ENCODE measurements at regions of chr7 and their contacts with region 1.

Region 1: DNA sequence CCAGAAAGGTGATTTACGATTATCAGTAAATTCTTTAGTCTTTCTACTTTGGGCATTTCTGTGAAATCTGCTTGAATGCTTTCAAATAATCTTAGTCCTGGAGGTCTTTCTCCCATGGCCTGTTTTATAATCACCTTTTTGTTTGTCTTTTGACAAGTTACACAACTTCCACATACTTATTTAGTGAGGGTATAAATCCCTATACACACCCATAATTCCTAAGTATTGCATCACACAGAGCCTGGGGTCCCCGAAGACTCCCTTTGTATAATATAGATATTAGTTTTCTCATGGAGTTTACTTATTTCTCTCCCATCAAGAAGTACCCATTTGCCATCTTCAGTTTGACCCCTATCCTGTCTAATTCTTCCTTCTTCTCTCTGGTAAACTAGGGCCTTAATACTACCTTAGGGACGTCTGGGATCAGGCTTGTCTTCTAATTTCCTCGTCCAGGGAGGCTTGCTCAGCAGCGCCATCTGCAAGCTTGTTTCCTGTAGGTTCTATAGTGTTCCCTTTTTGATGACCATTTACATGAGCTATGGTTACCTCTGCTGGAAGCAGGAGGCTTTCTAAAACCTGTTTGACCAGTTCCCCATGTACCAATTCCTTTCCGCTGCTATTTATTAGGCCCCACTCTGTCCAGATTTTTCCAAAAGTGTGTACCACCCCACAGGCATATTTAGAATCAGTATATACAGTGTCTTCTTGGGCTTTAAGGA is 8.1 kb downstream of the DNAH11 start:
- DNase-seq: peak in 1 of 2 experiments; percentile 52
- H3K4me3 ChIP-seq: no peak overlapping the region
- H3K27ac ChIP-seq: no peak overlapping the region
- H3K4me1 ChIP-seq: peaks cover 0 to 8% (median 1%) of the 10 kb centered on the region in 4 experiments; a peak in 3 of 7 replicates
- H3K27me3 ChIP-seq: no peaks in the 10 kb centered on the region
- CTCF ChIP-seq: peak; percentile 21 to 71 (median 51); a peak in 3 of 4 replicates
- EP300 ChIP-seq: no peak
- POLR2A ChIP-seq: no peak
- RAD21 ChIP-seq: peak; percentile 48 to 58

Region 2: DNA sequence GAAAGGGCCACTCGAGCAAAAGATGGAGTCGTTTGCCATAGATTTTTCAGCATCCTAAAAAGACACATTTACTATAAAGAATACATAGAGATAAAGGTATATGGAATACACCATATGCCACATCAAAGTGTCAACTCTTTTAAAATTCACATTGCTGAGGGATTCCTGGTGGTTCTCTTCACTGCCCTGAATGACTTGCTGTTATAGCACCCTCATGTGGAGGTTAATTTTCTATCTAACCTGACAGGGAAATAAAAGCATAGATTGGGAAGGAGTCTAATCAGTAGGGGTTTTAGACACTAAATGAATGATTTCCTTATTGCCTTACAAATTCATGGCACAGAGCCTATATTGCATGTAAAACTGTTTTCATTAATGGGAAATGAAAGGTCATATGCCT is 17.8 kb after region 1 on chr7:
- CTCF ChIA-PET with region 1: interaction called, 15 read pairs
- POLR2A ChIA-PET with region 1: no interaction called
- DNase-seq: no peak
- H3K4me3 ChIP-seq: no peak overlapping the region
- H3K27ac ChIP-seq: no peak overlapping the region
- H3K4me1 ChIP-seq: no peaks in the 10 kb centered on the region; a peak in 1 of 7 replicates
- H3K27me3 ChIP-seq: no peaks in the 10 kb centered on the region
- CTCF ChIP-seq: peak in 2 of 3 experiments; percentile 22 to 35; a peak in 2 of 4 replicates
- EP300 ChIP-seq: no peak
- POLR2A ChIP-seq: no peak
- RAD21 ChIP-seq: peak; percentile 51 to 66

Measured in H1 (cell line).